IMR-90 (cell line): ENCODE measurements at regions of chr5 and their contacts with region 1.

Region 1: GRCh38 chr5:98768160-98769005 is 5.1 kb upstream of the RGMB start:
- DNase-seq: peak; percentile 73
- ATAC-seq: peak; percentile 33
- H3K4me3 ChIP-seq: peak overlapping the region; percentile 81
- H3K27ac ChIP-seq: peak overlapping the region; percentile 85
- H3K4me1 ChIP-seq: peaks cover 6% of the 10 kb centered on the region; the same call in 1 of the 2 replicates
- H3K27me3 ChIP-seq: no peaks in the 10 kb centered on the region
- CTCF ChIP-seq: peak; percentile 88
- POLR2A ChIP-seq: peak; percentile 59; the same call in 1 of the 2 replicates
- RAD21 ChIP-seq: peak; percentile 90

Region 2: GRCh38 chr5:97726106-97726505 is 1042.3 kb before region 1 on chr5:
- CTCF ChIA-PET with region 1: no interaction called
- POLR2A ChIA-PET with region 1: no interaction called
- dilution Hi-C with region 1: no loop called
- in situ Hi-C with region 1: no loop called
- intact Hi-C with region 1: loop called (anchors 10 kb)
- DNase-seq: no peak
- ATAC-seq: no peak
- H3K4me3 ChIP-seq: no peak overlapping the region
- H3K27ac ChIP-seq: no peak overlapping the region
- H3K4me1 ChIP-seq: no peaks in the 10 kb centered on the region
- H3K27me3 ChIP-seq: no peaks in the 10 kb centered on the region
- CTCF ChIP-seq: no peak
- POLR2A ChIP-seq: no peak
- RAD21 ChIP-seq: no peak

Region 3: GRCh38 chr5:98109561-98110006 is 658.8 kb before region 1 on chr5:
- CTCF ChIA-PET with region 1: interaction called, 5 read pairs
- POLR2A ChIA-PET with region 1: interaction called, 7 read pairs
- dilution Hi-C with region 1: no loop called
- in situ Hi-C with region 1: loop called (anchors 5 kb)
- intact Hi-C with region 1: loop called (anchors 1 kb)
- DNase-seq: peak; percentile 92
- ATAC-seq: peak; percentile 28
- H3K4me3 ChIP-seq: peak overlapping the region; percentile 3; the same call in 1 of the 2 replicates
- H3K27ac ChIP-seq: peak overlapping the region; percentile 99
- H3K4me1 ChIP-seq: peaks cover 10% of the 10 kb centered on the region
- H3K27me3 ChIP-seq: no peaks in the 10 kb centered on the region
- CTCF ChIP-seq: no peak
- POLR2A ChIP-seq: peak; percentile 77; the same call in 1 of the 2 replicates
- RAD21 ChIP-seq: peak; percentile 20; the same call in 1 of the 2 replicates

Region 4: DNA sequence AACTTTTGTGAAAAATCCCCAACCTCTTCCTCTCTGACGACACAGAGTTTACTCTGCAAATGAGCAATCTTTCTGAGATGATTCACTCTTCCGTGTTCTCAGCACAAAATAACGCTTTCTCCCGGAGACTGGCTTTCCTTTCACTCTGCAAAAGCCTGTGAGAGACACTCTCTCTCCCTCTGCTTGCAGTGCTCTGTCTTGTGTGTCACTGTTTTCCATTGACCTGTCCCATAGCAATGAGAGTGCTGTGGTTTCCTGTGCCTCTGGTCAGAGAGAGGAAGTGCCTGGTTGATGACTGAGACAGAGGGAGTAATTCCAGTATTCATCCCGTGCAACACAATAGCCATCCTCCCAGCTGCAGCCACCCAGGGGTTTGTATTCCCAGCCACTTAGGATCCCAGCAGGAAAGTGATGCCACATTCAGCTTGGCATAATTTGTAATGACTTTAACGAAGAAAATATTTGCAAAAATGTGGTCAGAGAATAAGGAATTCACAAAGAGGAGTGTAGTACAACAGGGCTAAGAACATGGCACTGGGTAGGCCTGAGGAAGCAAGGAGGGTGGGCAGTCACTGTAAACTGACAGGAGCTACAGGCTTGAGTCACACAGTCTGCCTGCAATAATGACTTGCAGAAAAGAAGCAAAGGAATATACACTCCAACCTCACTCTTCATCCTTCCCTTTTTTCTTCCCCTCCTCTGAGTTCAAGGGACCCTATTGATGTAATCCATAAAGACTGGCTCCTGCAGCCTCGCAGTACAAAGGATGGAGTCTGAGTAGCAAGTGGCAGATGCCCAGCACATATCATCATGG is 458.4 kb before region 1 on chr5:
- CTCF ChIA-PET with region 1: interaction called, 3 read pairs
- POLR2A ChIA-PET with region 1: interaction called, 4 read pairs
- dilution Hi-C with region 1: no loop called
- in situ Hi-C with region 1: no loop called
- intact Hi-C with region 1: loop called (anchors 1 kb)
- DNase-seq: peak; percentile 99
- ATAC-seq: peak; percentile 78
- H3K4me3 ChIP-seq: peak overlapping the region; percentile 24; the same call in 1 of the 2 replicates
- H3K27ac ChIP-seq: peak overlapping the region; percentile 77
- H3K4me1 ChIP-seq: peaks cover 15% of the 10 kb centered on the region; the same call in 1 of the 2 replicates
- H3K27me3 ChIP-seq: no peaks in the 10 kb centered on the region
- CTCF ChIP-seq: 0 out of 2 replicates have a peak, but pooled peaks have one; percentile 9
- POLR2A ChIP-seq: peak; percentile 81; the same call in 1 of the 2 replicates
- RAD21 ChIP-seq: peak; percentile 47

Region 5: GRCh38 chr5:98414938-98415337 is 353.4 kb before region 1 on chr5:
- CTCF ChIA-PET with region 1: interaction called, 3 read pairs
- POLR2A ChIA-PET with region 1: interaction called, 3 read pairs
- dilution Hi-C with region 1: no loop called
- in situ Hi-C with region 1: no loop called
- intact Hi-C with region 1: loop called (anchors 1 kb)
- DNase-seq: peak; percentile 95
- ATAC-seq: peak; percentile 83
- H3K4me3 ChIP-seq: no peak overlapping the region
- H3K27ac ChIP-seq: no peak overlapping the region
- H3K4me1 ChIP-seq: peaks cover 15% of the 10 kb centered on the region; the same call in 1 of the 2 replicates
- H3K27me3 ChIP-seq: no peaks in the 10 kb centered on the region
- CTCF ChIP-seq: no peak
- POLR2A ChIP-seq: no peak
- RAD21 ChIP-seq: no peak; the same call in 1 of the 2 replicates

Region 6: GRCh38 chr5:98599019-98599418 is 169.4 kb before region 1 on chr5:
- CTCF ChIA-PET with region 1: no interaction called
- POLR2A ChIA-PET with region 1: no interaction called
- dilution Hi-C with region 1: no loop called
- in situ Hi-C with region 1: no loop called
- intact Hi-C with region 1: no loop called
- DNase-seq: peak; percentile 28
- ATAC-seq: no peak
- H3K4me3 ChIP-seq: no peak overlapping the region
- H3K27ac ChIP-seq: no peak overlapping the region
- H3K4me1 ChIP-seq: no peaks in the 10 kb centered on the region
- H3K27me3 ChIP-seq: no peaks in the 10 kb centered on the region
- CTCF ChIP-seq: no peak
- POLR2A ChIP-seq: no peak
- RAD21 ChIP-seq: no peak

Region 7: GRCh38 chr5:98631311-98632054 is 136.9 kb before region 1 on chr5:
- CTCF ChIA-PET with region 1: no interaction called
- POLR2A ChIA-PET with region 1: interaction called, 5 read pairs
- dilution Hi-C with region 1: no loop called
- in situ Hi-C with region 1: no loop called
- intact Hi-C with region 1: loop called (anchors 10 kb)
- DNase-seq: peak; percentile 68
- ATAC-seq: peak; percentile 73
- H3K4me3 ChIP-seq: no peak overlapping the region
- H3K27ac ChIP-seq: no peak overlapping the region
- H3K4me1 ChIP-seq: peaks cover 7% of the 10 kb centered on the region
- H3K27me3 ChIP-seq: no peaks in the 10 kb centered on the region
- CTCF ChIP-seq: no peak
- POLR2A ChIP-seq: no peak
- RAD21 ChIP-seq: no peak